HEK293 (cell line): ENCODE measurements at regions of chr5 and their contacts with region 1.

Region 1: DNA sequence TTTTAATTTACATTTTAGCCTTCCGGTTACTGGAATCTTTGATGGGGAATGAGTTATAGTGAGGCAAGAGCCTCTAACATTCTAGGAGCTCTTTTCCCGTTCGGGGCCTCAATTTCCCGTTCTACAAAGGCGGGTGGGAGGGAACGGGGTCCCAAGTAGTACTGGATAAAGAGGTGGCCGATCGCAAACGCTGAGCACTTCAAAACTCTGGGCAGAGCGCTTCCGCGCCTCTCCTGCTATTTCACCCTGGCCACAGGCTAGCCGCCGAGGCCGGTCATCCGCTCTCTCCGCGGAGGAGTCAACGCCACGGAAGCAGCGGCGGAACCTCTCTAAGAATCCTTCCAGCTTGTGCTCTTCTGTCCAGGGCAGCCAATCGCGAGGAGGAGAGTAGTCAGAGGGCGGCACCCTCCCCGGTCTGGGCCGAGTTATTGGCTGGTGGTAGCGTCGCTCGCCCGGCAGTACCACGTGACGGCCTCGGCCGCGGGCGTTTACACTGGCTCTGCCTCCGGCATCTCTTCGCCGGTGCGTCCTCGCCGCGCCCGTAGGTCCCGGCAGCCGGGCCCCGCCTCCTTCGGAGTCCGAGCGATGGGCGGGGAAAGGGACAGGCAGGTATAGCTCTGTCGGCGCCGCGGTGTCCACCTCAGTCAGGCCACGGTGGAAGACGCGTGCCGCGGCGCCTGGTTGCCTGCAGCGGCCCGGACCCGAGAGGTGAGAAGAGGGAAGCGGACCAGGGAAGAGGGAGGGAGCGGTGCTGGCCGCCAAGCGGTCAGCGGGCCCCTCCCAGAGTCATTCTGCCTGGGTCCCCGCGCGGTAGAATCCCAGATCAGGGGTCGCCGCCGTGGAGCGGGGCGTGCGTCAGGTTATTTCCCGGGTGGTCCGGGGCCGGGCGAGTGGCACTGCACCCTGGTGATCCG is at the start of gene SLC26A2:
- H3K4me3 ChIP-seq: peak within 1 kb of the TSS; percentile 72
- H3K27ac ChIP-seq: peak within 1 kb of the TSS; percentile 54; the same call in 1 of the 2 replicates
- H3K4me1 ChIP-seq: peaks cover 7% of the 10 kb centered on the region; the same call in 1 of the 2 replicates
- CTCF ChIP-seq: peak; percentile 77

Region 2: DNA sequence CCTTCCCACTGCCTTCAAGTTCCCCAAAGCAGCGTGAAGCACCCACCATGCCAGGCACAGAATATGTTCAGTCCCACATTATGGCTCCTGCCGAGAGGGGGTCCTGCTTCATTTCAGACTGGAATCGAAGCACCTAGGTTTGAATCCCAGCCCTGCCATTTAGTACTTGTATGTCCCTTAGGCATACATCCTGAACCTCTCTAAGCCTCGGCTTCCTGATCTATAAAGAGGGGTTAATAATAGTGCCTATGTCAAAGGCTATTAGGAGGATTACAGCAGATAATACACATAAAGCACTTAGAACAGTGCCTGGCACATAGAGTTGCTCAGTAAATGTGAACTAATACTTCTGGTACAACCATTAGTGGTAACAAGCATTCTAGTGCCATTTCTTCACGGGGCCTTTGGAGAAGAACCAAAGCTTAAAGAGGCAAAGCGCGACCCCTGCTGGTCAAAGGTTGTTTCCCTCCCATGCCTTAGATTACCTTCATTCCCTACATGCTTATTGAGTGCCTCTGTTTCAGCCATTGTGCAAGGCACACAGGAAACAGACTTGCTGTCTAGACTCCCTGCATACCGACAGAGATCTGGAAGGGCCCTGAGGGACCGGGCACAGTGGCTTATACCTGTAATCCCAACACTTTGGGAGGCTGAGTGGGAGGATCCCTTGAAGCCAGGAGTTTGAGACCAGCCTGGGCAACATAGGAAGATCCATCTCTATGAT is 132.2 kb before region 1 on chr5:
- CTCF ChIA-PET with region 1: interaction called, 175 read pairs
- POLR2A ChIA-PET with region 1: interaction called, 4 read pairs
- H3K4me3 ChIP-seq: no peak overlapping the region
- H3K27ac ChIP-seq: no peak overlapping the region
- H3K4me1 ChIP-seq: no peaks in the 10 kb centered on the region
- CTCF ChIP-seq: peak; percentile 65

Region 3: DNA sequence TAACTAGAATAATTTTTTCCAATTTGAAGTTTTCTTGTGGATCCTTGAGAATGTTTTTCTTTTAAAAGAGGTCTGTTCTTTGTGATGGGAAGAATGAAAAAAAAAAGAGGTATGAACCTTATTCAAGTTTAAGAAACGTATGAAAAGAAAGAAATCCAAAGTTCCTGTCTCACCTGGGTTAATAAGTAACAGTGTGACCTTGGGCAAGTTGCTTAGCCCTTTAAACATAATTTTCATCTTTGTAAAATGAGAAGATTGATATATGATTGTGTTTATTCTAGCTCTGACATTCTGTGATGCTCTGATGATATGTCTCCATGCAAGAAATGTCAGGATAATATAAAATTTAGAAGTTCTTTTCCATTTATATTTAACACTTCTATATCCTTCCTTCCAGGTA is 19.4 kb after region 1 on chr5:
- CTCF ChIA-PET with region 1: interaction called, 14 read pairs
- POLR2A ChIA-PET with region 1: interaction called, 3 read pairs
- H3K4me3 ChIP-seq: no peak overlapping the region
- H3K27ac ChIP-seq: no peak overlapping the region
- H3K4me1 ChIP-seq: no peaks in the 10 kb centered on the region
- CTCF ChIP-seq: no peak

Region 4: GRCh38 chr5:150000256-150000989 is 39.9 kb after region 1 on chr5 and contains the starts of genes HMGXB3 and TIGD6:
- CTCF ChIA-PET with region 1: interaction called, 5 read pairs
- POLR2A ChIA-PET with region 1: interaction called, 14 read pairs
- H3K4me3 ChIP-seq: peak within 1 kb of the TSS; percentile 93
- H3K27ac ChIP-seq: peak within 1 kb of the TSS; percentile 85
- H3K4me1 ChIP-seq: peaks cover 9% of the 10 kb centered on the region
- CTCF ChIP-seq: peak; percentile 46; the same call in 1 of the 2 replicates